ENCODE measurements at regions of chr21 and their contacts with region 1.

Region 1: DNA sequence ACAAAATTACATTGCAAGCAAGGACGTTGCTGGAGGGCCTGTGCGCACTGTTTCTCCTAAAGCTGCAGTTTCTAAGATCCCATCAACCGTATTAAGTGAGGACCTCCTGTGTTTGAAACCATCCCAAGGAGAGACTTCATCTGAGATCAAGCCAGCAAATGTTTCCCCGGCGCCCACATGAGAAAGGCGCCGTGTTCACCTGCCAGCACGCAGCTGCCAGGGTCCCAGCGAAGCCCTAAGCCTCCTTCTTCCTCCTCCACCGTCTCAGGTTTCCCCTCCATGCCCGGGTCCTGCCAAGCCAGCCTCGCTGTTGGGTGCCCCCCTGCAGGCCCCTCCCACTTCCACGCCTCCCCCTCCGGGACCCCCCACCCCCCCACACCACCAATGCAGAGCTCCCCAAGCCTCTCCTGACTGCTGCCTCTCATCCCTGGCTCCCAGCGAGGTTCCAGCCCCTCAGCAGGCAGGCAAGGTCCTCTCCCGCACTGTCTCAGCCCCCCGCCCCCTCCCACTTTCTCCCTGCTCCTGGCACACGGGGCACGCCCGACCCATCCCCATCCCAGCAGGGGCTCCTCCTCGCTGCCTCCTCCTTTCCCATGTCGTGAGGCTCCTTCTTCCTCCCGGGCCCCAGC is 8.6 kb upstream of the TFF1 start:
- DNase-seq: no peak
- H3K4me3 Mint-ChIP-seq: peak overlapping the region; percentile 48
- H3K27ac Mint-ChIP-seq: peak overlapping the region; percentile 81
- H3K4me1 Mint-ChIP-seq: peaks cover 24% of the 10 kb centered on the region
- H3K27me3 Mint-ChIP-seq: no peaks in the 10 kb centered on the region

Region 2: GRCh38 chr21:42406201-42406621 is 31.2 kb after region 1 on chr21:
- intact Hi-C with region 1: loop called (anchors 2 kb)
- DNase-seq: peak; percentile 91
- H3K4me3 Mint-ChIP-seq: peak overlapping the region; percentile 93
- H3K27ac Mint-ChIP-seq: peak overlapping the region; percentile 88
- H3K4me1 Mint-ChIP-seq: peaks cover 49% of the 10 kb centered on the region
- H3K27me3 Mint-ChIP-seq: no peaks in the 10 kb centered on the region

Measured in activated CD4-positive, alpha-beta T cell treated with anti-CD3 and anti-CD28 coated beads, Interleukin-2, amount 10 ng/mL, durations not matched to agents 24 days and 14 days (primary cell).